ENCODE measurements at regions of chr5 and their contacts with region 1.

Region 1: DNA sequence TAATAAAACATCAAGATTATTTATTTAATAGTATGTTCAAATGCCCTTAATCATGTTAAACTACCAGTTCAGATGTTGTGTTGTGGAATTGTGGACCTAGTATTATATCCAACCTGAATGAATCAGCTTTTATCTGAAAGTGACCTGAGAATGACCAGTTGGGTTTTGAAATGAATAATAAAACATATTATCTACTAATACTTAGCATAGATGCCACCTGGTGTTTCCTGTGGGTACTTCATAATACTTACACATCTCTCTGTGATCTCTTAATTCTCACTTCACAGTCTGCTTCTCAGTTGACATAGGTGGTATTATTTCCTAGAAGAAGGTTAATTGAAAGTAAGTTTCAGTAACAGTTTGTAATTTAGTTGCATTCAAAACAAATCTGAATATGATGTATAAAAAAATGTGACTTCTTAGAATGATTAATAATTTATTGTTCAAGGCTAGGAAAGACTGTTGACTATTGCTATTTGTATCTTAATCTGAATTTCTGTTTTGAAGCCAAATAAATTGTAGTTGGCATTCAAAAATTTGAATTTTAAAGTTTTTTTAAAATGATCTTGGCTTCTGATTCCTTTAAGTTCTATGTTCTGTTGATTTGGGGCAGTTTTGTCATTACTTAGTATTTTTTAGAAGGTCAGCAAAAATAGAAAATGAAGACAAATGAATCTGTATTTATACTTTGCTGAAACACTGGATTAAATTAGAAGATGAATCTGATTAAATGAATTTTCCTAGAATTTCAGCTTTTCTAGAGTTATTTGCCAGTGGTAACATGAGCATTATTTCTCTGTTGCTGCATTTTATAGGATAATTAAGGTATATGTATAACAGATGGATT is 48.2 kb downstream of the KIF2A start:
- DNase-seq: peak; percentile 35
- ATAC-seq: peak; percentile 92
- H3K4me3 ChIP-seq: no peak overlapping the region
- H3K27ac ChIP-seq: no peak overlapping the region
- H3K4me1 ChIP-seq: no peaks in the 10 kb centered on the region
- H3K27me3 ChIP-seq: no peaks in the 10 kb centered on the region
- CTCF ChIP-seq: peak; percentile 39 to 69 (median 48); a peak in 4 of 6 replicates
- EP300 ChIP-seq: no peak
- POLR2A ChIP-seq: no peak
- RAD21 ChIP-seq: peak; percentile 68

Region 2: GRCh38 chr5:62214701-62215100 is 139.6 kb before region 1 on chr5:
- CTCF ChIA-PET with region 1: no interaction called
- POLR2A ChIA-PET with region 1: no interaction called
- RAD21 ChIA-PET with region 1: interaction called, 3 read pairs
- SMC1A ChIA-PET with region 1: interaction called, 5 read pairs
- in situ Hi-C with region 1: loop called (anchors 10 kb)
- intact Hi-C with region 1: no loop called
- DNase-seq: no peak
- ATAC-seq: no peak
- H3K4me3 ChIP-seq: no peak overlapping the region
- H3K27ac ChIP-seq: no peak overlapping the region
- H3K4me1 ChIP-seq: no peaks in the 10 kb centered on the region
- H3K27me3 ChIP-seq: no peaks in the 10 kb centered on the region; a peak in 1 of 4 replicates
- CTCF ChIP-seq: no peak
- EP300 ChIP-seq: no peak
- POLR2A ChIP-seq: no peak
- RAD21 ChIP-seq: no peak

Region 3: GRCh38 chr5:62231576-62231975 is 122.7 kb before region 1 on chr5:
- CTCF ChIA-PET with region 1: interaction called, 176 read pairs
- POLR2A ChIA-PET with region 1: no interaction called
- RAD21 ChIA-PET with region 1: interaction called, 4 read pairs
- SMC1A ChIA-PET with region 1: interaction called, 7 read pairs
- in situ Hi-C with region 1: no loop called
- intact Hi-C with region 1: no loop called
- DNase-seq: no peak
- ATAC-seq: no peak
- H3K4me3 ChIP-seq: no peak overlapping the region
- H3K27ac ChIP-seq: no peak overlapping the region
- H3K4me1 ChIP-seq: no peaks in the 10 kb centered on the region; the same call in 1 of the 2 replicates
- H3K27me3 ChIP-seq: no peaks in the 10 kb centered on the region
- CTCF ChIP-seq: no peak
- EP300 ChIP-seq: no peak
- POLR2A ChIP-seq: no peak
- RAD21 ChIP-seq: no peak

Region 4: DNA sequence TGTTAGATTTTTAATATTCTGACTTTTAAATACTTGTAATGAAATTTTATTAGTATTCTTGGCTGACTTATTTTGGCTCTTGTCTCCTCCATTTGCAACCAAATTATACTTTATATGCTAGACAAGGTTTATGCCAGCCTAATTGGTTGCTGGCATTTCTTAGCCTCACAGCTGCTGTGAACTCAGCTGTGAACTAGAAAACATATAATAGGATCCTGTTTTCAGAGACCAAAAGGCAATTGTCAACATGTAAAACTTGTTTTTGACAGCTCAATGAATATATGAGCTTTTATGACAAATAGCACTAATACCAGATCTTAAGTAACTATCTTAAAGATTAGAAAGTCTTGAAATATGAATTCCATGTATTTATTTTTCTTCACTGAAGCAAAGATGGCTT is 22.3 kb before region 1 on chr5:
- CTCF ChIA-PET with region 1: interaction called, 10 read pairs
- POLR2A ChIA-PET with region 1: interaction called, 3 read pairs
- RAD21 ChIA-PET with region 1: interaction called, 7 read pairs
- SMC1A ChIA-PET with region 1: interaction called, 3 read pairs
- in situ Hi-C with region 1: no loop called
- intact Hi-C with region 1: no loop called
- DNase-seq: no peak
- ATAC-seq: no peak
- H3K4me3 ChIP-seq: no peak overlapping the region
- H3K27ac ChIP-seq: no peak overlapping the region
- H3K4me1 ChIP-seq: peaks cover 2% of the 10 kb centered on the region; the same call in 1 of the 2 replicates
- H3K27me3 ChIP-seq: no peaks in the 10 kb centered on the region
- CTCF ChIP-seq: no peak
- EP300 ChIP-seq: no peak
- POLR2A ChIP-seq: no peak
- RAD21 ChIP-seq: no peak

Region 5: GRCh38 chr5:62343428-62343827 is 10.8 kb before region 1 on chr5:
- CTCF ChIA-PET with region 1: interaction called, 9 read pairs
- POLR2A ChIA-PET with region 1: no interaction called
- RAD21 ChIA-PET with region 1: no interaction called
- SMC1A ChIA-PET with region 1: interaction called, 11 read pairs
- in situ Hi-C with region 1: no loop called
- intact Hi-C with region 1: no loop called
- DNase-seq: no peak
- ATAC-seq: no peak
- H3K4me3 ChIP-seq: no peak overlapping the region
- H3K27ac ChIP-seq: no peak overlapping the region
- H3K4me1 ChIP-seq: peaks cover 13% of the 10 kb centered on the region
- H3K27me3 ChIP-seq: no peaks in the 10 kb centered on the region
- CTCF ChIP-seq: no peak
- EP300 ChIP-seq: no peak
- POLR2A ChIP-seq: no peak
- RAD21 ChIP-seq: no peak

Region 6: GRCh38 chr5:62403434-62404250 is 49.4 kb after region 1 on chr5 and contains the start of gene DIMT1:
- CTCF ChIA-PET with region 1: interaction called, 4 read pairs
- POLR2A ChIA-PET with region 1: interaction called, 11 read pairs
- RAD21 ChIA-PET with region 1: interaction called, 3 read pairs
- SMC1A ChIA-PET with region 1: interaction called, 4 read pairs
- in situ Hi-C with region 1: no loop called
- intact Hi-C with region 1: no loop called
- DNase-seq: peak; percentile 86
- ATAC-seq: peak; percentile 98
- H3K4me3 ChIP-seq: peak within 1 kb of the TSS; percentile 87
- H3K27ac ChIP-seq: peak within 1 kb of the TSS; percentile 94
- H3K4me1 ChIP-seq: 0 out of 2 replicates have a peak, but pooled peaks cover 6% of the 10 kb centered on the region
- H3K27me3 ChIP-seq: no peaks in the 10 kb centered on the region
- CTCF ChIP-seq: no peak
- EP300 ChIP-seq: no peak
- POLR2A ChIP-seq: peak; percentile 95
- RAD21 ChIP-seq: no peak
- polyA plus RNA-seq, gene DIMT1: 19.0 to 26.4 TPM

Measured in GM12878 (cell line).